Heart left ventricle (tissue), 16 donors: ENCODE measurements at regions of chr11 and their contacts with region 1.

Region 1: DNA sequence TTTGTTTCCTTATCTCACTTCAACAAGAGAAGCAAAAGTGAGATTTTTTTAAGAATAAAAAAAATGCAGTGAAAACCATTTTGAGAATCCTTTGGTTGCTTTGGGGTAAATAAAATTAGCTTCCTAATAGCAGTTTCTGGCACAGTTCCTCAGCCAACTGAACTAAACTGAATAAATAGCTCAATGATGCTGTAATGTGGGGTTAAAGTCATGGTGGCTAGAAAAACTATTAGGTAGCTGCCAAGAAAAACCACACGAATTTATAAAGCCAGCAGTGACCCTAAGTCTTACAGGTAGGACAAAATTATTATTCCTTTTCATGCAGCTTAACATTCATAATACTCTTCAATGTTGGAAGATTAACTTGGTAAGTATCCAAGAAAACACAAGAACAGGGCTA is 142.4 kb downstream of the APIP start:
- DNase-seq: no peak
- ATAC-seq: no peak
- H3K4me3 ChIP-seq: no peak overlapping the region
- H3K27ac ChIP-seq: no peak overlapping the region
- H3K4me1 ChIP-seq: peaks cover 0 to 3% (median 0%) of the 10 kb centered on the region in 12 donors
- H3K27me3 ChIP-seq: peaks cover 0 to 5% (median 0%) of the 10 kb centered on the region in 9 donors
- CTCF ChIP-seq: no peak
- POLR2A ChIP-seq: no peak

Region 2: DNA sequence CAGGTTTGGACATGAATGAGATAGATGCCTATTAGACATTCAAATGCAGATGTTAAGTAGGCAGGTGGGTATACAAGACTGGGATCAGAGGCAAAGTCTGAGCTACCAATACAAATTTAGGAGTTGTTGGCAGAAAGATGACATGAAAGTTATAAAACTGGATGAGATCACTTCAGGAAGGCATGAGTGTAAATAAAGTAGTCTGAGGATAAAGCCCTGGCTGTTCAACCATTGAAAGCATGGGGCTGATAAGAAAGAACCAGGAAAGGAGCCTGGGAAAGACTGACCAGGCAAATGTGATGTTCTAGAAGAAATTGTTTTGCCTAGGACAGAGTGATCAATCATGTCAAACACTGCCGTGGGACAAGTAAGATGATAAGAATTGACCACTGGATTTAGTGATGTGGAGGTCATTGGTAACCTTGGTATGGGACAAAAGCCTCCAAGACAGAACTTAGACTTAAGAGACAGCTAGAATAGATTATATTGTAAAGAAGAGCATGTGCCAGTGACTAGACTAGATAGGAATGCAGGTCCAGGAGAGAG is 54.5 kb before region 1 on chr11:
- intact Hi-C with region 1: loop called in 1 of 10 experiments (anchors 10 kb)
- DNase-seq: no peak
- ATAC-seq: no peak
- H3K4me3 ChIP-seq: no peak overlapping the region
- H3K27ac ChIP-seq: no peak overlapping the region
- H3K4me1 ChIP-seq: no peaks in the 10 kb centered on the region
- H3K27me3 ChIP-seq: peaks cover 0 to 3% (median 0%) of the 10 kb centered on the region in 9 donors
- CTCF ChIP-seq: no peak
- POLR2A ChIP-seq: no peak